ENCODE measurements at regions of chr17 and their contacts with region 1.

Region 1: DNA sequence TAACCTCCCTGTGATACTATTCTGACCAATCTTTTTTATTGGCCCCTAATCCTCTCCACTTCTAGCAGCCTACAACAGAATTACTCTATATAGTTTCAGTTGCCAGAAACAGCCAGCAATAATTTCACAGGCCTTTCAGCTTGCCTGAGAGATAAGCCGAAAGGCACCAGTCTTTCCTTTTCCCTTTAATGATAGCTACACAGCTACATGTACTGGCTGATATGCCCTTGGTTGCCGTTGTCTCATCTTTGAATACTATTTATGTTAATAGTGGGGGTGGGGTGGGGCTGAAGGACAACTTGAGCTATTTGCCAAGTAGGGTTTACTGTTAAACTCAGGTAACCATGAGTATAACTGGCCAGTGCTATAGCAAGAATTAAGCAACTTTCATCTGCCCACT is 35.8 kb upstream of the RASL10B start:
- DNase-seq: no peak
- ATAC-seq: no peak

Region 2: DNA sequence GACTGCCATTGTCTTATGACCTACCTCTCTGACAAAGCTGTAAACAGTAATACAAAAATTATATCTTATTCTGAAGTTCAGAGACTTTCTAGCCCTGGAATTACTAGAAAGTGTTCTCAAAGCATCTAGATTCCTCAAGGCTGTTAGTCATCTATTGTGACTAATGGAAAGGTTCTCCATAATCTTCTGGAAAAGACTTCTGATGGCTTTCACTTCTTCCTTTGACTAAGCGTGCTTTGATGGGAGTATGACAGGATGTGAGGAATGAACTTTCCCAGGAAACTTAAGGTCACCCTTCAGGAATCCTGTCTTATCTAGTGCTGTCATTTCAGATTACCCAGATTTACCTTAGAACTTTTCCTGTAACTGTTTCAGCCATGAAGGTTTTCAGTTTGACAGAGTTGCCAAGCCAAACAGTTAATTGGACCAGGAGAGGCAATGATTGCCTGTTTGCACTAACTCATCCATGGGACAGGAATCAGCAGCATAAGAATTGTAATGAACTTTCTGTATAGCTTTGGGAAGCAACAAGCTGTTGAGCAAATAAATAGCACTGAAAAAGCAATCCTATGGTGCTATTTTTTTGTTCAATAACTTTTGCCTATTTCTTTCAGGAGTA is 65.0 kb before region 1 on chr17:
- intact Hi-C with region 1: no loop called
- DNase-seq: no peak
- ATAC-seq: no peak

Region 3: DNA sequence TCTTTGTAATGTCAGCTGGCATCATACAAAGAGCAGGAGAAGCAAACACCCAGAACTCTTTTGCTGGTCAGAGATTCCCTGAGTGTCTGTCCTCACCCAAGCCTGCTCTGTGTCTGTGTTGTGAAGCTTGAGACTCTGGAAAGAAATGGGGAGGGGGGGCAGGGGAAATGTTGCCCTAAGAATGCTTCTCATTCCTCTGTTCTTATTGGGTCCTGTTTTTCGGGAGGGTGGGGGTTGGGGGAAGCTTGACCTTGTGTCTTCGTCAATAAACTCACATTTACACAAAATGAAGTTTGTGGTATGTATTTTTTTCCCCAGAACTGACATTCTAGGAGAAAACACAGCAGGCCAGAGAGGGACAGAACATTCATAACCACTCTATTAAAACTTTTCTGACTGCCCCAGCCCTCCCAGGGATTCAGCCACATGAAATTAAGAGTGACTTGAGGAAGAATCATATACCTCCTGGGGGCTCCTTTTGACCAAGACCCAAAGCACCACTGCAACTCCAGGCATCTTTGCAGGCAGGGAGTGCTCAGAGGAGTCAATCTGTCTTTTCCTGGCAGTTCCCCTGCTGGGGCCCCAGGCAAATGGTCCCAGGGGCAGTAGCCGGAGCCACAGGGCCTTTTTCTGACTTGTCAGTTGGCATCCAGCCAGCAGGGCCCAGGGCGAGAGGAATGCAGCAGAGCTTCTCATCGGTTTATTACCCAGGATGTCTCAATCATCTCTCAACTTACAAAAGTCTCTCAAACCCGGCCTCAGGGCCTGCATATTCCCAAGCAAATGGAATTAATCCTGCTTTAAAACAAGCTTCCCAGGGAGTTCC is 30.7 kb after region 1 on chr17:
- intact Hi-C with region 1: loop called (anchors 2 kb)
- DNase-seq: peak; percentile 81
- ATAC-seq: peak; percentile 65

Measured in sciatic nerve (tissue), 2 donors.